ENCODE measurements at regions of chr6 and their contacts with region 1.

Region 1: DNA sequence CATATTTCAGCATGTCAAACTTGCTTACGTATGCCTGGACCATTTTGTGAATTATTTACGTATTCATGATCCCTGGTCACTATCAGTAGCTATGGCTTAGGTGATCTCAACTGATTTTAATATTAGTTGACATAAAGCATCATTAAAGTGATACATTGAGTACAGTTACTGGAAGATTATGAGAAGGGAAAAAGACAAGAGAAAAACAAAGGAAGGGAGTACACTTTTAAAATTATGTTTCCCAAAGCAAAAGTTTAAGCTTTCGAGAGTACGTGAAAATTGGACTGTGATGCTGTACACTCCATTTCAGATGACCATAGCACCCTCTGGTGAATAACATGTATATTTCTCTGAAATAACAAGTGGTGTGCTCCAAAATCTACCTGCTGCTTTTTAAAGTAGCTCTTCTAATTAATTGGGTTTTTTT is 215.0 kb upstream of the HSF2 start:
- DNase-seq: peak; percentile 47
- ATAC-seq: peak; percentile 84
- H3K4me3 ChIP-seq: peak overlapping the region; percentile 3; the same call in 1 of the 2 replicates
- H3K27ac ChIP-seq: no peak overlapping the region
- H3K4me1 ChIP-seq: no peaks in the 10 kb centered on the region
- H3K27me3 ChIP-seq: no peaks in the 10 kb centered on the region
- CTCF ChIP-seq: peak; percentile 64
- POLR2A ChIP-seq: no peak
- RAD21 ChIP-seq: peak; percentile 79

Region 2: GRCh38 chr6:121319112-121319553 is 865.3 kb before region 1 on chr6:
- CTCF ChIA-PET with region 1: no interaction called
- POLR2A ChIA-PET with region 1: no interaction called
- dilution Hi-C with region 1: no loop called
- in situ Hi-C with region 1: no loop called
- intact Hi-C with region 1: loop called (anchors 5 kb)
- DNase-seq: peak; percentile 20
- ATAC-seq: peak; percentile 73
- H3K4me3 ChIP-seq: 0 out of 2 replicates have a peak overlapping the region, but pooled peaks have one; percentile 0
- H3K27ac ChIP-seq: no peak overlapping the region
- H3K4me1 ChIP-seq: no peaks in the 10 kb centered on the region
- H3K27me3 ChIP-seq: no peaks in the 10 kb centered on the region
- CTCF ChIP-seq: peak; percentile 48
- POLR2A ChIP-seq: no peak
- RAD21 ChIP-seq: 0 out of 2 replicates have a peak, but pooled peaks have one; percentile 21

Region 3: DNA sequence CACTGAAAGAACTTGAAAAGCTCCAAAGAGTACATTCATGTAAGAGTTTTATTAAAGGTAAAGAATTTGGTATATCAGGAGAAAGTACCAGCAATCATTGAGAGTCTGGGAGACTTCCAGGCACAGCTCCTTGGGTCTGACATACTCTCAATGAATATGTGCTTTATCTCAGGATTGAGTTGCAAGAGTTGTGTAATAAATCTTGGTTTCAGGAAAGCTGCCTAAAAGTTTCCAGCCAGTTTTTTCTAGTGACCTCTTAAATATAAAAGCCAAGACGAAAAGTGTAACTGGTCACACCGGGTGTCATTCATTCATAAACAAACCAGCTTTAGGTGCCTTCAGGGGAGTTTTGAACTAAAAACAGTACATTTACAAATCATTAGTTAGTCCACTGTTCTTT is 770.5 kb before region 1 on chr6:
- CTCF ChIA-PET with region 1: no interaction called
- POLR2A ChIA-PET with region 1: no interaction called
- dilution Hi-C with region 1: no loop called
- in situ Hi-C with region 1: loop called (anchors 5 kb)
- intact Hi-C with region 1: no loop called
- DNase-seq: no peak
- ATAC-seq: no peak
- H3K4me3 ChIP-seq: no peak overlapping the region
- H3K27ac ChIP-seq: no peak overlapping the region
- H3K4me1 ChIP-seq: no peaks in the 10 kb centered on the region
- H3K27me3 ChIP-seq: no peaks in the 10 kb centered on the region
- CTCF ChIP-seq: no peak
- POLR2A ChIP-seq: no peak
- RAD21 ChIP-seq: no peak

Region 4: GRCh38 chr6:122049341-122049740 is 135.1 kb before region 1 on chr6:
- CTCF ChIA-PET with region 1: no interaction called
- POLR2A ChIA-PET with region 1: no interaction called
- dilution Hi-C with region 1: no loop called
- in situ Hi-C with region 1: loop called (anchors 10 kb)
- intact Hi-C with region 1: no loop called
- DNase-seq: peak; percentile 38
- ATAC-seq: peak; percentile 75
- H3K4me3 ChIP-seq: no peak overlapping the region; the same call in 1 of the 2 replicates
- H3K27ac ChIP-seq: peak overlapping the region; percentile 24; the same call in 1 of the 2 replicates
- H3K4me1 ChIP-seq: peaks cover 2% of the 10 kb centered on the region; the same call in 1 of the 2 replicates
- H3K27me3 ChIP-seq: no peaks in the 10 kb centered on the region
- CTCF ChIP-seq: no peak
- POLR2A ChIP-seq: no peak
- RAD21 ChIP-seq: no peak

Region 5: GRCh38 chr6:122068291-122068769 is 116.1 kb before region 1 on chr6:
- CTCF ChIA-PET with region 1: no interaction called
- POLR2A ChIA-PET with region 1: no interaction called
- dilution Hi-C with region 1: no loop called
- in situ Hi-C with region 1: no loop called
- intact Hi-C with region 1: no loop called
- DNase-seq: no peak
- ATAC-seq: no peak
- H3K4me3 ChIP-seq: no peak overlapping the region
- H3K27ac ChIP-seq: no peak overlapping the region
- H3K4me1 ChIP-seq: no peaks in the 10 kb centered on the region
- H3K27me3 ChIP-seq: no peaks in the 10 kb centered on the region
- CTCF ChIP-seq: no peak
- POLR2A ChIP-seq: no peak
- RAD21 ChIP-seq: no peak

Region 6: DNA sequence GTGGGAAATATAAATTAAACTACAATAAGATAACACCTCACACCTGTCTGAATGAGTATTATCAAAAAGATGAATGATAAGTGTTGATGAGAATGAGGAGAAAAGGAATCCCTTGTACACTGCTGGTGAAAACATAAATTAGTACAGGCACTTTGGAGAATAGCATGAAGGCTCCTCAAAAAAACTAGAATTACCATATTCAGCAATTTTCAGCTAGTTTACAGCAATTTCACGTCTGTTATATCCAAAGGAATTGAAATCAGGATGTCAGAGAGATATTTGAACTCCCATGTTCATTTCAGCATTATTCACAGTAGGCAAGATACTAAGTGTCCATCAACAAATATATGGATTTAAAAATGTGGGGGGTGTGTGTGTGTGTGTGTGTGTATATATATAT is 1104.2 kb after region 1 on chr6:
- CTCF ChIA-PET with region 1: no interaction called
- POLR2A ChIA-PET with region 1: no interaction called
- dilution Hi-C with region 1: no loop called
- in situ Hi-C with region 1: no loop called
- intact Hi-C with region 1: no loop called
- DNase-seq: no peak
- ATAC-seq: no peak
- H3K4me3 ChIP-seq: no peak overlapping the region
- H3K27ac ChIP-seq: no peak overlapping the region
- H3K4me1 ChIP-seq: no peaks in the 10 kb centered on the region
- H3K27me3 ChIP-seq: no peaks in the 10 kb centered on the region
- CTCF ChIP-seq: no peak
- POLR2A ChIP-seq: no peak
- RAD21 ChIP-seq: no peak

Measured in IMR-90 (cell line).